Caco-2 (cell line): ENCODE measurements at regions of chr7 and their contacts with region 1.

Region 1: GRCh38 chr7:73718905-73719805 is at the start of gene STX1A:
- DNase-seq: peak; percentile 79 to 86
- H3K4me3 ChIP-seq: peak within 1 kb of the TSS; percentile 89
- H3K4me3 Mint-ChIP-seq: peak within 1 kb of the TSS; percentile 73
- H3K27ac Mint-ChIP-seq: peak within 1 kb of the TSS; percentile 75
- H3K4me1 ChIP-seq: peaks cover 38% of the 10 kb centered on the region
- H3K4me1 Mint-ChIP-seq: peaks cover 16% of the 10 kb centered on the region
- H3K27me3 ChIP-seq: no peaks in the 10 kb centered on the region
- H3K27me3 Mint-ChIP-seq: no peaks in the 10 kb centered on the region
- CTCF ChIP-seq: no peak
- total RNA-seq, gene STX1A: 26.4 and 28.6 TPM in 2 replicates

Region 2: GRCh38 chr7:73533742-73534141 is 185.4 kb before region 1 on chr7:
- CTCF ChIA-PET with region 1: no interaction called
- POLR2A ChIA-PET with region 1: no interaction called
- intact Hi-C with region 1: no loop called
- DNase-seq: no peak
- H3K4me3 ChIP-seq: no peak overlapping the region
- H3K4me3 Mint-ChIP-seq: no peak overlapping the region
- H3K27ac Mint-ChIP-seq: no peak overlapping the region
- H3K4me1 ChIP-seq: no peaks in the 10 kb centered on the region
- H3K4me1 Mint-ChIP-seq: no peaks in the 10 kb centered on the region
- H3K27me3 ChIP-seq: no peaks in the 10 kb centered on the region
- H3K27me3 Mint-ChIP-seq: no peaks in the 10 kb centered on the region
- CTCF ChIP-seq: no peak

Region 3: DNA sequence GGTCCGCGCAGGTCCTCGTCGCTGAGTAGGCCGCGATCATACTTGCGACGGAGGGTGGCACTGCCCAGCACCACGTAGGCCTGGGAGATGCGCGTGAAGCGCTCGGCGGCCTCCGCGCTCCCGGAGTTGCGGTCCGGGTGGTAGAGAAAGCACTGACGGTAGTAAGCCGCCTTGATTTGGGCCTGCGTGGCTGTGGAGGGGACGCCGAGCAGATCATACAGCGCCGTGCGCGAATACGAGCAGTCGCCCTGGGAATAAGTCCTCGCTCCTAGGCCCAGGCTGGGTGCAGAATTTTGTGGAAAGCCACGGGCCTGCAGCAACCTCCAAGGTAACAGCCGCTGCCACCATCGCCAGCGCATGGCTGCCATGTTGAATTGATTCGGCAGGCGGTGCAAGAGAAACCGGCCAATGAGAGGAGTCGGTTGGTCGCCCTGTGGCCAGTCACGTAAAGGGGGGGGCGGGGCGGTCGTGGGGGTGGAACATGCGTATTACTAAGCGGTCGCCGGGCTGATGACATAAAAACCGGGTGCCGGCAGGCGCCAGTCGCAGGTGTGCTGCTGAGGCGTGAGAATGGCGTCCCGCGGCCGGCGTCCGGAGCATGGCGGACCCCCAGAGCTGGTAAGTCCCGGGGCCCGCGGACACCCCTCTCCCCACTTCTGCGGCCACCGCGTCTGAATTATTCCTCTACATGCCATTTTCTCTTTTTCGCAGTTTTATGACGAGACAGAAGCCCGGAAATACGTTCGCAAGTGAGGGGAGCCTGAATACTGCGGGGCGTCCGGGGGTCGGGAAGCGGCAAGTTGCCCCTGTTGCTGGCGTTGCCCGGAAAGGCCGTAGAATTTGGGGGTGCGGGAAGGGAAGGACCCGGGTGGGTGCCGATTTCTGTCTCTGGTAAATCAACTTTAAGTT is 35.8 kb before region 1 on chr7 and contains the starts of genes BUD23 and DNAJC30:
- CTCF ChIA-PET with region 1: no interaction called
- POLR2A ChIA-PET with region 1: no interaction called
- intact Hi-C with region 1: loop called (anchors 2 kb)
- DNase-seq: peak; percentile 95 to 99
- H3K4me3 ChIP-seq: peak within 1 kb of the TSS; percentile 86
- H3K4me3 Mint-ChIP-seq: peak within 1 kb of the TSS; percentile 93
- H3K27ac Mint-ChIP-seq: peak within 1 kb of the TSS; percentile 99
- H3K4me1 ChIP-seq: peaks cover 11% of the 10 kb centered on the region; the same call in 1 of the 2 replicates
- H3K4me1 Mint-ChIP-seq: peaks cover 7% of the 10 kb centered on the region
- H3K27me3 ChIP-seq: no peaks in the 10 kb centered on the region
- H3K27me3 Mint-ChIP-seq: no peaks in the 10 kb centered on the region
- CTCF ChIP-seq: no peak
- total RNA-seq, gene BUD23: 138 and 144 TPM in 2 replicates
- total RNA-seq, gene DNAJC30: 15.5 and 15.9 TPM in 2 replicates

Region 4: DNA sequence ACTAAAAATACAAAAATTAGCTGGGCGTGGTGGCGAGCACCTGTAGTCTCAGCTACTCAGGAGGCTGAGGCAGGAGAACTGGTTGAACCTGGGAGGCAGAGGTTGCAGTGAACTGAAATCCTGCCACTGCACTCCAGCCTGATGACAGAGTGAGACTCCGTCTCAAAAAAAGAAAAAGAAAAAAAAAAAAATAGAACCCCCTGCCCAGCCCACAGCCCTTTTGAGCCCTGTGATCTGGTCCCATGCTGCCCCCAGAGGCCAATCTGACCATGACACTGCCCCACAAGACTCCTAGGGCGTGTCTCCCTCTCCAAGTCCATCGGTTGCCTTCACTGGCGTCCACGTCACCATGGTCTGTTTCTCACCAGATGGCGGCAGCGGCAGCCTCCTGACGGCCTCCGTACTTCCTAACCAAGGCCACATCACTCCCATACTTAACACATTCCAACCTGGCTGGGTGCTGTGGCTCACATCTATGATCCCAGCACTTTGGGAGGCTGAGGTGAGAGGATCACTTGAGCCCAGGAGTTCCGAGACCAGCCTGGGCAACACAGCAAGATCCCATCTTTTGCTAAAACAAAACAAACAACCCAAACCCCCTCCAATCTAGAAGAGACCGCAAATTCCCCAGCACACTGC is 17.7 kb before region 1 on chr7:
- CTCF ChIA-PET with region 1: interaction called, 9 read pairs
- POLR2A ChIA-PET with region 1: interaction called, 5 read pairs
- intact Hi-C with region 1: loop called (anchors 1 kb)
- DNase-seq: peak; percentile 77 to 78
- H3K4me3 ChIP-seq: no peak overlapping the region
- H3K4me3 Mint-ChIP-seq: no peak overlapping the region
- H3K27ac Mint-ChIP-seq: no peak overlapping the region
- H3K4me1 ChIP-seq: peaks cover 12% of the 10 kb centered on the region
- H3K4me1 Mint-ChIP-seq: no peaks in the 10 kb centered on the region
- H3K27me3 ChIP-seq: no peaks in the 10 kb centered on the region
- H3K27me3 Mint-ChIP-seq: no peaks in the 10 kb centered on the region
- CTCF ChIP-seq: peak; percentile 62 to 79

Region 5: GRCh38 chr7:74129887-74130286 is 410.7 kb after region 1 on chr7:
- CTCF ChIA-PET with region 1: no interaction called
- POLR2A ChIA-PET with region 1: no interaction called
- intact Hi-C with region 1: no loop called
- DNase-seq: no peak
- H3K4me3 ChIP-seq: no peak overlapping the region
- H3K4me3 Mint-ChIP-seq: no peak overlapping the region
- H3K27ac Mint-ChIP-seq: no peak overlapping the region
- H3K4me1 ChIP-seq: peaks cover 5% of the 10 kb centered on the region; the same call in 1 of the 2 replicates
- H3K4me1 Mint-ChIP-seq: no peaks in the 10 kb centered on the region
- H3K27me3 ChIP-seq: no peaks in the 10 kb centered on the region
- H3K27me3 Mint-ChIP-seq: no peaks in the 10 kb centered on the region
- CTCF ChIP-seq: no peak